ENCODE measurements at regions of chr6 and their contacts with region 1.

Region 1: DNA sequence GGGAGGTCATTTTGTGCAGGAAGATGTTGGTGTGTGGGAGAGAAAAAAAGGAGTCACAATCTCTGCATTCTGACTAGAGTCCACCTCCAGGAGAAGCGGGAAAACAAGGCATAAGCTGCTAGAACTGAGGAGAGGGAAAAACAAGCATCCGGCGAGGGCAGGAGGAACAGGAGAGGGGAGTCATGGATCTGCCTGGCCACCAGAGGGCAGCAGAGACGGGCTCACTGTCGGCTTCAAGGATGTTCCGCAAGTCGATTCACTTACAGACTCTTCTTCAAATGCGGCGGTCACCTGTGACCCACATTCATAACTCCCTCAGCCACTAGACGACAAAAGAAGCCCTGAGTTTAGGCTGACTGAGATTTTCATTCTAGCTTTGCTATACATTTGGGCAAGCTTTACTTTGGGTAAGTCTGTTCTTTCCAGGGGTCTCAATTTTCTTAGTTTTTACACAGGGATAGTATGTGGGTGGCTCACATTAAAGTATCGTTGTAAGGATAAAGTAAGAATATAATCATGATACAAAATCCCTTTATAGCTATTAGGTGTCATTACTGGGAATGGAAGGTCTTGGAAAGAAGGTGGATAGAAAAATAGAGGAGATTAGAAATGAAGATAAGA is 6.6 kb upstream of the BTNL2 start:
- DNase-seq: peak; percentile 91
- ATAC-seq: peak; percentile 86
- H3K4me3 ChIP-seq: no peak overlapping the region
- H3K4me3 Mint-ChIP-seq: peak overlapping the region; percentile 27
- H3K27ac ChIP-seq: no peak overlapping the region
- H3K27ac Mint-ChIP-seq: peak overlapping the region; percentile 8
- H3K4me1 ChIP-seq: peaks cover 7 to 11% of the 10 kb centered on the region in 2 donors
- H3K4me1 Mint-ChIP-seq: peaks cover 13% of the 10 kb centered on the region
- H3K27me3 ChIP-seq: peaks cover 0 to 19% (median 10%) of the 10 kb centered on the region in 4 experiments
- H3K27me3 Mint-ChIP-seq: peaks cover 20% of the 10 kb centered on the region
- CTCF ChIP-seq: peak; percentile 94

Region 2: DNA sequence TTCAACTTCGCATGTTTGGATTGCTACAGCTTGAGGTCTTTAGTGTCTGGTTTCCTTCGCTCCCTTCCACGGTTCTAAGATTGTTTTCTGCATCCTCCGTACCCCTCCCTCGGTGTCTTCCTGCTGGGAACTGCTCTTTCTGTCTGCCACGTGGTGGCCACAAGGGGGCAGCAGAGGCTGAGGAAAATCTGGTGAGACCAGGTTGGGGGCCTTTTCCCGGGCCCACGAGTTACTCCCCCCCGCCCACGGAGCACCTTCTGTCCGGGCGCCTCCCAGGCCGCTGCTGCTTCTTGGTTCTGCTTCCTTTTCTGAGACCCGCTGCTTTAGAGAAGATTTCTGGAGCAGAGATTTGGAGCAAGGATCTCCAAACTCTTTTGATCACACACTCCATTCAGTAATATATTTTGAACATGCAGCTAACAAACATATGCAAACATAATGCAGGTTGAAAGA is 168.6 kb before region 1 on chr6:
- CTCF ChIA-PET with region 1: interaction called, 172 read pairs
- POLR2A ChIA-PET with region 1: interaction called, 4 read pairs
- intact Hi-C with region 1: loop called (anchors 1 kb)
- DNase-seq: peak; percentile 87
- ATAC-seq: peak; percentile 93
- H3K4me3 ChIP-seq: peak overlapping the region in 3 of 5 experiments; percentile 8 to 40 (median 24)
- H3K4me3 Mint-ChIP-seq: peak overlapping the region; percentile 76
- H3K27ac ChIP-seq: no peak overlapping the region
- H3K27ac Mint-ChIP-seq: peak overlapping the region; percentile 33
- H3K4me1 ChIP-seq: peaks cover 8 to 16% of the 10 kb centered on the region in 2 donors
- H3K4me1 Mint-ChIP-seq: peaks cover 15% of the 10 kb centered on the region
- H3K27me3 ChIP-seq: no peaks in the 10 kb centered on the region
- H3K27me3 Mint-ChIP-seq: no peaks in the 10 kb centered on the region
- CTCF ChIP-seq: peak; percentile 90

Region 3: DNA sequence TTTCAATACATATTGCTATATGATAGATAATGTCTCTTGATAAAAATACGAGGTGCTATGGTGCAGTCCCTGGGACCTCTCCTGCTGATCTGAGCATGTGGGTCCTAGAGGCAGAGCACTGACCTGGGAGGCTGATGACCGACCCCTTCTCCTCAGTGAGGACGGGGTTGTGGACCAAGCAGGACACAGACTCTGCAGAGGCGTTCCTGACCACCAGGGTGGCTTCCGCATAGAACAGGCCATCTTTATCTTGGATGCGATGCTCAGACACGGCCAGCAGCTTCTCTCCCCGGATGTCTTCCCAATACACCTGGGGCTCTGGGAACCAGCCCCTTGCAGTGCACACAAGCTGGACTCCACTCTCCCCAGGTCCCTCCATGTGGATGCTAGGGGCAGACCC is 10.7 kb before region 1 on chr6:
- CTCF ChIA-PET with region 1: interaction called, 11 read pairs
- POLR2A ChIA-PET with region 1: no interaction called
- intact Hi-C with region 1: no loop called
- DNase-seq: no peak
- ATAC-seq: no peak
- H3K4me3 ChIP-seq: no peak overlapping the region
- H3K4me3 Mint-ChIP-seq: no peak overlapping the region
- H3K27ac ChIP-seq: no peak overlapping the region
- H3K27ac Mint-ChIP-seq: no peak overlapping the region
- H3K4me1 ChIP-seq: no peaks in the 10 kb centered on the region
- H3K4me1 Mint-ChIP-seq: peaks cover 8% of the 10 kb centered on the region
- H3K27me3 ChIP-seq: peaks cover 0 to 9% (median 0%) of the 10 kb centered on the region in 4 experiments
- H3K27me3 Mint-ChIP-seq: peaks cover 6% of the 10 kb centered on the region
- CTCF ChIP-seq: no peak

Region 4: DNA sequence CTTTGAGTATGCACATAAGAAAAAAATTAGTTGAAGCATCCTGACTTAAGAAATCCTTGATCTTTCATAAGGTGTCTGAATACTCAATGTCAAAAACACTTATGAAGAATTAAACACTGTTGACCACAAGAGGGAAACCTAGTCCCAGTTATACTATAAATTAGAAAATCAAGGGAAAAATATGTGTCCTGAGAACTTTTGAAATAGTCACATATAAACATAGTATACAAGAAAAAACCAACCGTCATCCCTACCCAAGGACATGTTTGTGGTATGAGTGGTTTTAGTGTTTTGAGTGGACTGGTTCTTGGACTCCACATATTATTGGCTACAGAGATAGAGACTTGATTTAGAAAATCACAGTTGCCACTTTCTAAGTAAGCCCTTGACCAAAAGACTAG is 18.5 kb after region 1 on chr6:
- CTCF ChIA-PET with region 1: interaction called, 46 read pairs
- POLR2A ChIA-PET with region 1: no interaction called
- intact Hi-C with region 1: loop called (anchors 2 kb)
- DNase-seq: peak; percentile 78
- ATAC-seq: peak; percentile 38
- H3K4me3 ChIP-seq: no peak overlapping the region
- H3K4me3 Mint-ChIP-seq: no peak overlapping the region
- H3K27ac ChIP-seq: no peak overlapping the region
- H3K27ac Mint-ChIP-seq: peak overlapping the region; percentile 63
- H3K4me1 ChIP-seq: peaks cover 21 to 27% of the 10 kb centered on the region in 2 donors
- H3K4me1 Mint-ChIP-seq: peaks cover 32% of the 10 kb centered on the region
- H3K27me3 ChIP-seq: no peaks in the 10 kb centered on the region
- H3K27me3 Mint-ChIP-seq: no peaks in the 10 kb centered on the region
- CTCF ChIP-seq: peak; percentile 83

Region 5: GRCh38 chr6:32472781-32473375 is 59.3 kb after region 1 on chr6:
- CTCF ChIA-PET with region 1: no interaction called
- POLR2A ChIA-PET with region 1: no interaction called
- intact Hi-C with region 1: no loop called
- DNase-seq: peak; percentile 69
- ATAC-seq: peak; percentile 11
- H3K4me3 ChIP-seq: peak overlapping the region in 4 of 5 experiments; percentile 28 to 52 (median 48)
- H3K4me3 Mint-ChIP-seq: peak overlapping the region; percentile 96
- H3K27ac ChIP-seq: peak overlapping the region; percentile 99 to 100
- H3K27ac Mint-ChIP-seq: peak overlapping the region; percentile 100
- H3K4me1 ChIP-seq: peaks cover 29 to 30% of the 10 kb centered on the region in 2 donors
- H3K4me1 Mint-ChIP-seq: peaks cover 40% of the 10 kb centered on the region
- H3K27me3 ChIP-seq: no peaks in the 10 kb centered on the region
- H3K27me3 Mint-ChIP-seq: no peaks in the 10 kb centered on the region
- CTCF ChIP-seq: no peak

Region 6: DNA sequence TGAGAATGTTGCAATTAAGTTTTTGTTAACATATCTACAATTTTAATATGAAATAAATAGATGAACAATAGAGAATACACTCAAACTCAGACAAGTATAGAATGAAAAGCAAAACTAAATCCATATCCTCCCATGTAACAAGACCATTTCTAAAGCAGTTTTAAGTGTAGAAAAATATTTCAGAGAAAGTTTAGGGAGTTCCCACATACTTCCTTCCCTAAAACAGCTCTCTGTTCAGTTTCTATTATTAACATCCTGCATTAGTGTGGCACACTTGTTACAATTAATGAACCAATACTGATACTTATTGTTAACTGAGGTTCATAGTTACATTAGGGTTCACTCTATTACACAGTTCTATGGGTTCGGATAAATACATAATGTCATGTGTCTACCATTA is 78.2 kb after region 1 on chr6:
- CTCF ChIA-PET with region 1: no interaction called
- POLR2A ChIA-PET with region 1: no interaction called
- intact Hi-C with region 1: no loop called
- DNase-seq: no peak
- ATAC-seq: no peak
- H3K4me3 ChIP-seq: no peak overlapping the region
- H3K4me3 Mint-ChIP-seq: no peak overlapping the region
- H3K27ac ChIP-seq: no peak overlapping the region
- H3K27ac Mint-ChIP-seq: no peak overlapping the region
- H3K4me1 ChIP-seq: no peaks in the 10 kb centered on the region
- H3K4me1 Mint-ChIP-seq: no peaks in the 10 kb centered on the region
- H3K27me3 ChIP-seq: no peaks in the 10 kb centered on the region
- H3K27me3 Mint-ChIP-seq: no peaks in the 10 kb centered on the region
- CTCF ChIP-seq: no peak

Region 7: DNA sequence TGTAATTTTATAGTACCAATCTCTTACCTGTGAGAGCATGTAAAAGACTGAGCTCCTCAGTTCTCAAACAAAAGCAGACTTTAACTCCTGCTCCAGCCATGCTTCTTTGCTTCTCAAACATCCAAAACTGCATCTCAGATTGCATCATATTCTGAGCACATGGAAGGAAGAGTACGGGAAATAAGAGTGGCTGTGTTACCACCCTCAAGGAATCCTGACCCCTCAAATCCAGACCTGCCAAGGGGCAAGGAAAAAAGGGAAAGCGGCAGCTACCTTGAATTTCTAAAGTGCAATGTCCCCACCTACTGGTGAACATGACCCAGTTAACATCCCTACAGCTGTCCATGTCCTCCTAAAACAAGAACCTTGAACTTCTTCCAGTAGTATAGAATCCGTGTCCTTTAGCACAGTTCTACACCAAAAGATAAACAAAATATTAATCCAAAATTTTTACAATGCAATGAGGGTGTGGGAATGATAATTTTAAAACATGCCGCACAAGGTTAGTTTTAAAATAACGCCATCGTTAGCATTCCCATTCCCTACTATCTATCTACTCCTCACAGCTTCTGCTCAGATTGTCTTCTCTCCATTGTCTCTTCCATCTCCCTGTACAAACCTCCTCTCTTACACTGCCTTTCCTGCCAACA is 287.0 kb after region 1 on chr6:
- CTCF ChIA-PET with region 1: interaction called, 99 read pairs
- POLR2A ChIA-PET with region 1: no interaction called
- intact Hi-C with region 1: loop called (anchors 1 kb)
- DNase-seq: peak; percentile 79
- ATAC-seq: peak; percentile 71
- H3K4me3 ChIP-seq: peak overlapping the region in 3 of 5 experiments; percentile 13 to 38 (median 27)
- H3K4me3 Mint-ChIP-seq: peak overlapping the region; percentile 84
- H3K27ac ChIP-seq: no peak overlapping the region
- H3K27ac Mint-ChIP-seq: peak overlapping the region; percentile 85
- H3K4me1 ChIP-seq: peaks cover 0 to 4% of the 10 kb centered on the region in 2 donors
- H3K4me1 Mint-ChIP-seq: peaks cover 18% of the 10 kb centered on the region
- H3K27me3 ChIP-seq: peaks cover 0 to 6% (median 4%) of the 10 kb centered on the region in 4 experiments
- H3K27me3 Mint-ChIP-seq: peaks cover 3% of the 10 kb centered on the region
- CTCF ChIP-seq: peak; percentile 64

Region 8: GRCh38 chr6:32785781-32786533 is 372.4 kb after region 1 on chr6:
- CTCF ChIA-PET with region 1: interaction called, 229 read pairs
- POLR2A ChIA-PET with region 1: interaction called, 3 read pairs
- intact Hi-C with region 1: loop called (anchors 1 kb)
- DNase-seq: peak; percentile 77
- ATAC-seq: no peak
- H3K4me3 ChIP-seq: no peak overlapping the region
- H3K4me3 Mint-ChIP-seq: no peak overlapping the region
- H3K27ac ChIP-seq: no peak overlapping the region
- H3K27ac Mint-ChIP-seq: no peak overlapping the region
- H3K4me1 ChIP-seq: no peaks in the 10 kb centered on the region
- H3K4me1 Mint-ChIP-seq: peaks cover 2% of the 10 kb centered on the region
- H3K27me3 ChIP-seq: no peaks in the 10 kb centered on the region
- H3K27me3 Mint-ChIP-seq: no peaks in the 10 kb centered on the region
- CTCF ChIP-seq: peak; percentile 82

Region 9: GRCh38 chr6:32838114-32838958 is 424.8 kb after region 1 on chr6 and contains the start of gene TAP2:
- CTCF ChIA-PET with region 1: interaction called, 19 read pairs
- POLR2A ChIA-PET with region 1: no interaction called
- intact Hi-C with region 1: no loop called
- DNase-seq: peak; percentile 97
- ATAC-seq: peak; percentile 84
- H3K4me3 ChIP-seq: peak within 1 kb of the TSS; percentile 71 to 80 (median 76)
- H3K4me3 Mint-ChIP-seq: peak within 1 kb of the TSS; percentile 97
- H3K27ac ChIP-seq: peak within 1 kb of the TSS; percentile 83 to 97
- H3K27ac Mint-ChIP-seq: peak within 1 kb of the TSS; percentile 99
- H3K4me1 ChIP-seq: peaks cover 59 to 73% of the 10 kb centered on the region in 2 donors
- H3K4me1 Mint-ChIP-seq: peaks cover 92% of the 10 kb centered on the region
- H3K27me3 ChIP-seq: no peaks in the 10 kb centered on the region
- H3K27me3 Mint-ChIP-seq: no peaks in the 10 kb centered on the region
- CTCF ChIP-seq: peak; percentile 90
- total RNA-seq, gene TAP2: 126 and 135 TPM in 2 replicates

Region 10: DNA sequence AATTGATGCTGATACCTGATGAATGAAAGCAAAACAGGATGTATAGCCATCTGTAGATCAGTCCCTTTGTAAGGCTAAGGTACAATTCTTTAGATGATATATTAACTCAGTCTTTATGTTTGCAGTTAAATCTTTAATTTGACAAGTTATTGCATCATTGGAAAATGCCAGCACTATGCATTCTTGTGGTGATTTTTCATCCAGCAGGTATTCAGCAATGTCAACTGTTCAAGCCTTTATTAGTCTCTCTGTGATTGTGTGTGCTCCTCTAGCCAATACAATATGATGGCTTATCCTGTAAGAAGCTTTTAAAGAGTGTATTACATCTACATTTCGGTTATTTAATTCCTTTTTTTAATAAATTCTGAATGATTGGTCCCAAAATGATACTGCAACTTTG is 493.0 kb after region 1 on chr6:
- CTCF ChIA-PET with region 1: no interaction called
- POLR2A ChIA-PET with region 1: no interaction called
- intact Hi-C with region 1: no loop called
- DNase-seq: no peak
- ATAC-seq: no peak
- H3K4me3 ChIP-seq: no peak overlapping the region
- H3K4me3 Mint-ChIP-seq: no peak overlapping the region
- H3K27ac ChIP-seq: no peak overlapping the region
- H3K27ac Mint-ChIP-seq: no peak overlapping the region
- H3K4me1 ChIP-seq: peaks cover 0 to 6% of the 10 kb centered on the region in 2 donors
- H3K4me1 Mint-ChIP-seq: peaks cover 12% of the 10 kb centered on the region
- H3K27me3 ChIP-seq: no peaks in the 10 kb centered on the region
- H3K27me3 Mint-ChIP-seq: no peaks in the 10 kb centered on the region
- CTCF ChIP-seq: no peak